CD4-positive, alpha-beta T cell (primary cell): ENCODE measurements at regions of chr12 and their contacts with region 1.

Region 1: GRCh38 chr12:50222275-50222795 is 55.2 kb upstream of the CERS5 start:
- DNase-seq: peak in 4 of 14 experiments; percentile 30 to 64 (median 62)
- ATAC-seq: peak; percentile 49
- H3K4me3 ChIP-seq: peak overlapping the region; percentile 83
- H3K4me3 Mint-ChIP-seq: no peak overlapping the region
- H3K27ac ChIP-seq: peak overlapping the region; percentile 51 to 82
- H3K27ac Mint-ChIP-seq: no peak overlapping the region
- H3K4me1 ChIP-seq: peaks cover 53% of the 10 kb centered on the region
- H3K4me1 Mint-ChIP-seq: peaks cover 25% of the 10 kb centered on the region
- H3K27me3 ChIP-seq: no peaks in the 10 kb centered on the region
- H3K27me3 Mint-ChIP-seq: no peaks in the 10 kb centered on the region
- CTCF ChIP-seq: no peak

Region 2: GRCh38 chr12:50167041-50167828 is 55.1 kb before region 1 on chr12 and contains the start of gene CERS5:
- CTCF ChIA-PET with region 1: no interaction called
- POLR2A ChIA-PET with region 1: interaction called, 10 read pairs
- intact Hi-C with region 1: no loop called
- DNase-seq: peak; percentile 91 to 99 (median 94)
- ATAC-seq: peak; percentile 96
- H3K4me3 ChIP-seq: peak within 1 kb of the TSS; percentile 84
- H3K4me3 Mint-ChIP-seq: peak within 1 kb of the TSS; percentile 95
- H3K27ac ChIP-seq: peak within 1 kb of the TSS; percentile 85
- H3K27ac Mint-ChIP-seq: peak within 1 kb of the TSS; percentile 81
- H3K4me1 ChIP-seq: peaks cover 20% of the 10 kb centered on the region
- H3K4me1 Mint-ChIP-seq: peaks cover 34% of the 10 kb centered on the region
- H3K27me3 ChIP-seq: no peaks in the 10 kb centered on the region
- H3K27me3 Mint-ChIP-seq: no peaks in the 10 kb centered on the region
- CTCF ChIP-seq: no peak
- total RNA-seq, gene CERS5: 42.3 to 44.5 TPM

Region 3: DNA sequence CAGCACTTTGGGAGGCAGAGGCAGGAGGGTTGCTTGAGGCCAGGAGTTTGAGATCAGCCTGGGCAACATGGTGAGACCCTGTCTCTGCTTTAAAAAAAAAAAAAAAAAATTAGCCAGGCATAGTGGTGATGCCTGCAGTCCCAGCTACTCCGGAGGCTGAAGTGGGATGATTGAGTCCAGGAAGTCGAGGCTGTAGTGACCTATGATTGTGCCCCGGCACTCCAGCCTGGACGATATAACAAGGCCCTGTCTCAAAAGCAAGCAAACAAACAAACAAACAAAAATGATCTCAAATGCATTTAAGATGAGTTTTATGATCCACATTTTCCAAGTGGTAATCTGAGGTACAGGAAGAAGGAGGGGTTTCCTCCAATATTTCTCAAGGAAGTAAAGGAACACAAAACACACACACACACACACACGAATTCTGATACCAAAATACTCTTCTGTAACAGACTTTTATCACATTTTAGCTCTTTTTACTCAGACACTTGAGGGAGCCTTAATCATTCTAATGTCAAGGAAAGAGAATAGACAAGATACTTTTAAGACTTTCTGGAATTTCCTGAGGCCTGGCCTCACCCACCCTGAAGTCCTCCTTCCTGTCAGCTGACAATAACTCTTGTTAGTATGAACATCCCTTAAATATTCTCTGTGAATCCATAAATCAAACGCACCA is 10.8 kb before region 1 on chr12:
- CTCF ChIA-PET with region 1: interaction called, 6 read pairs
- POLR2A ChIA-PET with region 1: interaction called, 57 read pairs
- intact Hi-C with region 1: no loop called
- DNase-seq: peak in 3 of 14 experiments; percentile 14 to 49 (median 38)
- ATAC-seq: peak; percentile 34
- H3K4me3 ChIP-seq: no peak overlapping the region
- H3K4me3 Mint-ChIP-seq: peak overlapping the region; percentile 47
- H3K27ac ChIP-seq: peak overlapping the region; percentile 51 to 80
- H3K27ac Mint-ChIP-seq: peak overlapping the region; percentile 90
- H3K4me1 ChIP-seq: peaks cover 34% of the 10 kb centered on the region
- H3K4me1 Mint-ChIP-seq: peaks cover 42% of the 10 kb centered on the region
- H3K27me3 ChIP-seq: no peaks in the 10 kb centered on the region
- H3K27me3 Mint-ChIP-seq: no peaks in the 10 kb centered on the region
- CTCF ChIP-seq: no peak

Region 4: DNA sequence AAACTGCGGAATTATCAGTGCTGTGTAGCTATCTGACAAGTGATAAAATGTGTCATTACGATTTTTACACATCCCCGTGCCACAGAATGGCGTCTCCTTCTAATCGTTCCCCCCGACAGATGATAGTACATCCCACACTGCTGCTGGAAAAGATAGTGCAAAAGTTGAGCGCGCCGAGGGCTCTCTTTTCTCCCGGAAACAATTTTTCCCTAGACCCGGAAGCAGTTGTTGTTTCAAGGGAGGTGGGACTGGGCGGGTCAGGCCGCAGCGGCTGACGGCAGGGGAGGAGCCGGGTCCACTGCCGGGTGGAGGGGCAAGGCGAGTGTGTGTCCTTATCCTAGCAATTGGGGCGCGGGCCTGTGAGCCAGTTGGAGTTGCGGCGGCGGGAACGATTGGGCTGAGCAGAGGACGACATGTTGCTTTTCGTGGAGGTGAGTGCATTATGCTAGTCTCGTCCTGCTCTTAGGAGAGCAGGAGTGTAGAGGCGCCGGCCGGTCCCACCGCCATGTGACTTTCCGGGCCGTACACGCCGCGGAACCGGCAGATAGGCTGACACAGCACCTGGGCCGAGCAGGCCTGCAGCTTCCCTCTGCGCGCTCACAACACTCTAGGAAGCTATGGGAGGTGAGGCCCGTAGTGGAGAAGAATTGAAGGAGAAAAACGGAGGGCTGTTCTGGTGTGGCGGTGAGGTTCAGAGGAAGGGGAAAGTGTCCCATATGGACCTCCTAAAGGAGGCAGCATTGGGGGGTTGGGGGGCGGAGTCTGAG is 178.4 kb after region 1 on chr12 and contains the start of gene LARP4:
- CTCF ChIA-PET with region 1: no interaction called
- POLR2A ChIA-PET with region 1: no interaction called
- intact Hi-C with region 1: loop called in 1 of 2 experiments (anchors 5 kb)
- DNase-seq: peak; percentile 79 to 94 (median 85)
- ATAC-seq: peak; percentile 94
- H3K4me3 ChIP-seq: peak within 1 kb of the TSS; percentile 91
- H3K4me3 Mint-ChIP-seq: peak within 1 kb of the TSS; percentile 94
- H3K27ac ChIP-seq: peak within 1 kb of the TSS; percentile 65 to 70
- H3K27ac Mint-ChIP-seq: peak within 1 kb of the TSS; percentile 80
- H3K4me1 ChIP-seq: peaks cover 15% of the 10 kb centered on the region
- H3K4me1 Mint-ChIP-seq: peaks cover 30% of the 10 kb centered on the region
- H3K27me3 ChIP-seq: no peaks in the 10 kb centered on the region
- H3K27me3 Mint-ChIP-seq: peaks cover 11% of the 10 kb centered on the region
- CTCF ChIP-seq: peak; percentile 10
- total RNA-seq, gene LARP4: 17.6 to 18.1 TPM